ENCODE measurements at regions of chr9 and their contacts with region 1.

Region 1: DNA sequence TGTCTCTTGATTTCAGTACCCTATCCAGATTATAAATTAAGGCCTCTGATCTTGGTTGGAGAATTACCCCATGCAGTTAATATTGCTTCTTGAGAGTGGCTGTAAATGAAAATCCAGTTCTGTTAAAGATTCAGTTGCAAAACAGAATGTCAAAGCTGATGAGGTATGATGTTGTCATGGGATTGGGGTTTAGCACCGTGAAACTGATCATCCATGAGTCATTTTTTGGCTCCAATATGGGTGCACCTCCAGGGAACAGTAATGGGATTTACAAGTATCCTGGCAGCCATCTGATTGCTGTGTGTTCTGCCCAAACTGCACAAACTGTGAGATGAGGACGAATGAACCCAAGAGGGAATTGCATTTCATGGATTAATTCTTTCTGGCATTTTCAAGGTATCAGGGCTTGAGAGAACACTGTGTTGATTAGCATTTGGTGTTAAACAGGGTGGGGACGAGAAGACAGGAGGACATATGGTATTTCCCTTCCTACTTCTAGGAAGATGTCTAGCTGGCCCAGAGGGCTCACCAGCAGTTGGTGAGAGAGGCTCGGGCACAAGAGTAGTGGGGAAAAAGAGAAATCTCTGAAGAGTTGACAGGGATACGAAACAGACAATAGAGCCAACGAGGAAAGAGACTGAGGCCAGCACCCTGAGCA is 214.7 kb downstream of the GAS1 start:
- DNase-seq: peak; percentile 58 to 74
- ATAC-seq: peak; percentile 84 to 92
- H3K4me3 ChIP-seq: no peak overlapping the region
- H3K27ac ChIP-seq: peak overlapping the region; percentile 52 to 69 (median 60)
- H3K4me1 ChIP-seq: peaks cover 0 to 6% of the 10 kb centered on the region in 2 donors
- H3K27me3 ChIP-seq: peaks cover 0 to 2% (median 0%) of the 10 kb centered on the region in 3 donors
- CTCF ChIP-seq: no peak
- POLR2A ChIP-seq: peak in 1 of 2 donors; percentile 18

Region 2: DNA sequence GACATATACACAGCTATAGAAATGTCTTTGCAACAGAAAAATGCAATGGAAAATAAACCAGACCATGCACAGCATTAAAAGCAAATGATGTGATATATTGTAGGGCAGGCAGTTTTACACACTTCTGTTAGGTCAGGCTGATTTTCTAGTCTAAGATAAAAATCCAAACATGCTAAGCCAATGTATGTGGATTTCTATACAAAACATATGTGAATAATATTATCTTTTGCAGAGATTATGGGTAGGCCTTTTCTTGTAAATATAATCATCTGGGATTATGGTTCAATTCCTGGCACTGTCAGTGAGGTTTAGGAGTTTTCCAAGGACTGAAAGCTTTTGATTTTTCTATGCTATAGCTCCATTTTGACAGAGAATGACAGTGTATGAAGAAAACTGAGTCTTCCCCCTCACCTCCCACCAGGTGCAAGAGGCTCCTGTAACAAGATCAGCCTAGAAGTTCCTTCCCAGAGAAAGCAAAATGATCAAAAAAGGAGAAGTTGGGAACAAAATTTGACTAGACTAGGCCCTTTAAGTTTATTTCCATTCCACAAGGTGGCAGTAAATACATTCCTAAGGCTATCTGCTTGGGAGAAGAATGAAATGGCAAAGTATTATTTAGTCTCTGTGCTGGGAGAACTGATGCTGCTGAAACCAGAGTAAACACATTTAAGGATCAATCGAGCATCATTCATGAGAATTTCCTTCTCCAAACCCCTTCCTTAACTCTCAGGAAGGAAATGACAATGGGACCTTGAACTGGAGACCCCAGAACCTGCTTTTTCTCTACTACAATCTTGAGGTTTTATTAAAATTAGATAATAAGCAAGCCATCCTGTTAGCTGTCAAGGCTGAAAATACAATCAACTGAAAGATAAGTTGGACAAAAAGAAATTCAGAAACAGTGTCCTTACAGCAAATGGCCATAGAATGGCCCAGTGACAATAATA is 245.5 kb before region 1 on chr9:
- in situ Hi-C with region 1: loop called in 1 of 4 experiments (anchors 25 kb)
- intact Hi-C with region 1: no loop called
- DNase-seq: no peak
- ATAC-seq: peak; percentile 70 to 84
- H3K4me3 ChIP-seq: no peak overlapping the region
- H3K27ac ChIP-seq: no peak overlapping the region
- H3K4me1 ChIP-seq: no peaks in the 10 kb centered on the region
- H3K27me3 ChIP-seq: no peaks in the 10 kb centered on the region
- CTCF ChIP-seq: peak; percentile 52 to 67 (median 59)
- POLR2A ChIP-seq: no peak

Region 3: DNA sequence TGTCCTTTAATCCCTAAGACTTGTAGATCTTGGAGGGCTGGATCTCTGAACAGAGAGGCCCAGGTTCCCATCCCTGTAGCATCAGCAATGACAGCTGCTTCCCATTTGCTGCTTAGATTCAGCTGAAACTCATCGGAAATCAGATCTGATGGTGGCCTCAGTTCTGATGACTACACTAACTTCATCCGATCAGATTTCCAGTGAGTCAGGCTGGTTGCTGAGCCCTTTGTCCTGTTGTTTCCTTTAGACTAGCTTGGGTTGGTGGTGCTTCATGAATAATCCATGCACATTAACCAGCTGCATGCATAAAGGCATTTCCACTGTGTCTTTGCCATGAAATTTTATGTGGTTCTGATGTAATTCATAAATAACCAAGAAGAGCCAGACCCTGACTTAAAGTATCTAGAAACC is 183.2 kb before region 1 on chr9:
- in situ Hi-C with region 1: no loop called
- intact Hi-C with region 1: loop called (anchors 5 kb)
- DNase-seq: no peak
- ATAC-seq: no peak
- H3K4me3 ChIP-seq: no peak overlapping the region
- H3K27ac ChIP-seq: no peak overlapping the region
- H3K4me1 ChIP-seq: peaks cover 8 to 17% of the 10 kb centered on the region in 2 donors
- H3K27me3 ChIP-seq: no peaks in the 10 kb centered on the region
- CTCF ChIP-seq: no peak
- POLR2A ChIP-seq: no peak

Region 4: GRCh38 chr9:86637515-86637914 is 95.1 kb before region 1 on chr9:
- in situ Hi-C with region 1: loop called in 1 of 4 experiments (anchors 25 kb)
- intact Hi-C with region 1: no loop called
- DNase-seq: no peak
- ATAC-seq: no peak
- H3K4me3 ChIP-seq: no peak overlapping the region
- H3K27ac ChIP-seq: no peak overlapping the region
- H3K4me1 ChIP-seq: no peaks in the 10 kb centered on the region
- H3K27me3 ChIP-seq: no peaks in the 10 kb centered on the region
- CTCF ChIP-seq: peak in 1 of 5 experiments; percentile 25
- POLR2A ChIP-seq: no peak

Region 5: DNA sequence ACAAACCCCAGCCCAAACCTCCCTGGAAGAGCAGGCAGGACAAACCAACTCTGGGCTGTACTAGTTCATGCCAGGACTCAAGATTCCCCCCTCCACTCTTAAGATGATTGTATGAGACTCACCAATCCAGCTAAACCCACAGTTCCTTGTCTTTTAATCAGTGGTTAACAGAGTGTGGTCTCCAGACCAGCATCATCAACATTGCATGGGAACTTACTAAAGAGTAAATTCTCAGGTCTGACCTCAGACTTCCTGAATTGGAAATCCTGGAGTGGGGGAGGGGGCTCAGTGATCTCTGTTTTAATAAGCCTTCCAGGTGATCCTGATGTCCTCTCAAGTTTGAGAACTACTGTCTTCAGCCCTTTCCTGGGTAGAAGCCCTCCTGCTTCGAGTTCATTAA is 26.2 kb before region 1 on chr9:
- in situ Hi-C with region 1: no loop called
- intact Hi-C with region 1: no loop called
- DNase-seq: no peak
- ATAC-seq: no peak
- H3K4me3 ChIP-seq: no peak overlapping the region
- H3K27ac ChIP-seq: no peak overlapping the region
- H3K4me1 ChIP-seq: no peaks in the 10 kb centered on the region
- H3K27me3 ChIP-seq: no peaks in the 10 kb centered on the region
- CTCF ChIP-seq: no peak
- POLR2A ChIP-seq: no peak

Region 6: GRCh38 chr9:86721226-86721781 is 11.3 kb before region 1 on chr9:
- in situ Hi-C with region 1: no loop called
- intact Hi-C with region 1: no loop called
- DNase-seq: no peak
- ATAC-seq: peak; percentile 44 to 56
- H3K4me3 ChIP-seq: no peak overlapping the region
- H3K27ac ChIP-seq: peak overlapping the region; percentile 37 to 61 (median 46)
- H3K4me1 ChIP-seq: peaks cover 3 to 6% of the 10 kb centered on the region in 2 donors
- H3K27me3 ChIP-seq: no peaks in the 10 kb centered on the region
- CTCF ChIP-seq: no peak
- POLR2A ChIP-seq: no peak

Region 7: DNA sequence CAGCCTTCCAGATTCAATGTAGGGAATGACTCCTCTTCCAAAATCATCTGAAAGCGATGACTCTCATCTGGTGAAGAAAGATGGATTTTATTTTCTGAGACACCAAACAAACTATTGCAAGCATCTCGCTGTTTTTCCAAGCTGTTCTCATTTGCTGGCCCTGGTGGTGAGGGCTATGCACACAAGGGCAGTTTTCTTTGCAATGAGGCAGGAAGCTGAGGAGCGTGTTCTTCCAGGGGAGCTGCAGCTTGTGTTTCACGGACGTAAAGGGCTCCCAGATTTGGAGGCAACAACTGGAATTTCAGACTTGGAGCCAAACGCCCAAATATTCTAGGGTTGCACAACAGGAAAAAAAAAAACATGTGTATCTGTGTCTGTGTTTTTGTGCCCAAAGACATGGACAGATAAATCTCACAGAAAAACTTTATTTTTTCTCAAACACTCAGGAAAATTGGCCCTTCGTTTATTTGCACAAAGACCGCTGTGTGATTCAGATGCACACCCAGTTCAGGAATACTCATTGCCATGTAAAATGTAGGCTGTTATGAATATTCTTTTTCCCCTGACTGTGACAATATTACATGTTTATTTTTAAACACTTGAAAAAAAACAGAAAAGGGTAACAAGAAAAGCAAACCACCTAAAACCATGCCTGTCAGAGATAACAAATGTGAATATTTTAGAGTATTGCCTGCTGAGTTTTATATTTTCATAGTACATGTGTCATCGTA is 63.3 kb after region 1 on chr9:
- in situ Hi-C with region 1: no loop called
- intact Hi-C with region 1: loop called (anchors 2 kb)
- DNase-seq: peak; percentile 19 to 60
- ATAC-seq: peak; percentile 58 to 77
- H3K4me3 ChIP-seq: peak overlapping the region in 2 of 4 donors; percentile 29 to 35
- H3K27ac ChIP-seq: peak overlapping the region; percentile 45 to 54 (median 46)
- H3K4me1 ChIP-seq: no peaks in the 10 kb centered on the region
- H3K27me3 ChIP-seq: no peaks in the 10 kb centered on the region
- CTCF ChIP-seq: no peak
- POLR2A ChIP-seq: peak in 1 of 2 donors; percentile 20

Region 8: DNA sequence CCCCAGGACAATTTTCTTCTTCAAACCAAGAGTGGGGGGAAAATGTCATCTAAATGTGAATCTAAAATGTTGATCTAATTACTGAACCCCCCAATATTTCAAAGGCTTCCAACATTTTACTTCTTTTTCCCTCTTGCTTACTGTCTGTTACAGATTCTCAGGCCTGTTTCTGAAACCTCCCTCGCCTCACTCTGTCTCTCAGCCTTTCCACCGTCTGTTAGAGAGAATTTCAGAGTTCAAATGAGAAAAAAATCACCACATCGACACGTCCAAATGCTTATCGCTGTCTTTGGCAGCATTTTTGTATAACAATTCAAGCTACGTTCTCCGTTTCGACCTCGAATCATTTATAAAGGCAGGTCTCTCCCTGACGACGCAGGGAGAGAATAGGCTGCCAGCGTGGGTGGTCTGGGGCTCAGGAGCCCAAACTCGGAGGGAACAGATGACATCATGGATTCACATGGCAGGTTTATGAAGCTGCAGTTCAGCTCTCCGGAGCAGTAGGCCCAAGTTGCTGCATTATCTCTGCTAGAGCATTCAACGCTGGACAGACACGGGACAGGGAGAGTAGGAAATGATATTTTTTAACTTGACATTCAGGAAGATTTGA is 74.8 kb after region 1 on chr9:
- in situ Hi-C with region 1: no loop called
- intact Hi-C with region 1: no loop called
- DNase-seq: no peak
- ATAC-seq: no peak
- H3K4me3 ChIP-seq: no peak overlapping the region
- H3K27ac ChIP-seq: no peak overlapping the region
- H3K4me1 ChIP-seq: no peaks in the 10 kb centered on the region
- H3K27me3 ChIP-seq: peaks cover 0 to 2% (median 0%) of the 10 kb centered on the region in 3 donors
- CTCF ChIP-seq: no peak
- POLR2A ChIP-seq: no peak